ENCODE measurements at regions of chr5 and their contacts with region 1.

Region 1: DNA sequence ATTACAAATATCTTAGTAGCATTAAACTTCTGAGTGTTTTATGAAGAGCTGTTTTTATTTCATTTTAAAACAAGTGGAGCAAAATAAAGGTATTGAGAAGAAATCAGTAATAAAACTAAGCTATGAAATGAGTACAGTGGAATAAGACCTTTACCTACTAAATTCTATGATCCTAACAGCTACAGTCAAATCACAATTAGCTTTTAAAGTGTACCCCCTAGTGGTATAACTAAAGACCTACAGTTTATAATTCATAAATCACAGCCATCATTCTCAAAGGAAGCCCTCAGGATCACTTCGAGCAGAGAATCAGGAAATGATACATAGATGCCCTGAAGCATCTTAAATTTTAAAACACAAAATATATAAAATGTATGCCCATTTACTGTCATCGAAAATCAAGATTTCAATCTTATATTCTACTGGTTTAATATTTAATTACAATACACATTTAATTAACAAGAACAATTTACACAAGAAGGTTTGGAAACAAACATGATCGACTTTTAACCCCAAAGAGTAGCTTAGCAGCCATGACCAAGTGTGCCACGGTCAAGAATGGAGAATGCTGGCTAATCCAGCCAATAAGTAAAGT is 12.3 kb downstream of the CCNH start:
- DNase-seq: peak; percentile 48 to 57
- ATAC-seq: peak; percentile 83 to 88
- H3K4me3 ChIP-seq: no peak overlapping the region
- H3K27ac ChIP-seq: no peak overlapping the region
- H3K4me1 ChIP-seq: peaks cover 4% of the 10 kb centered on the region; the same call in 1 of the 3 replicates
- CTCF ChIP-seq: peak; percentile 69
- EP300 ChIP-seq: no peak
- POLR2A ChIP-seq: no peak
- RAD21 ChIP-seq: peak; percentile 71 to 72

Region 2: DNA sequence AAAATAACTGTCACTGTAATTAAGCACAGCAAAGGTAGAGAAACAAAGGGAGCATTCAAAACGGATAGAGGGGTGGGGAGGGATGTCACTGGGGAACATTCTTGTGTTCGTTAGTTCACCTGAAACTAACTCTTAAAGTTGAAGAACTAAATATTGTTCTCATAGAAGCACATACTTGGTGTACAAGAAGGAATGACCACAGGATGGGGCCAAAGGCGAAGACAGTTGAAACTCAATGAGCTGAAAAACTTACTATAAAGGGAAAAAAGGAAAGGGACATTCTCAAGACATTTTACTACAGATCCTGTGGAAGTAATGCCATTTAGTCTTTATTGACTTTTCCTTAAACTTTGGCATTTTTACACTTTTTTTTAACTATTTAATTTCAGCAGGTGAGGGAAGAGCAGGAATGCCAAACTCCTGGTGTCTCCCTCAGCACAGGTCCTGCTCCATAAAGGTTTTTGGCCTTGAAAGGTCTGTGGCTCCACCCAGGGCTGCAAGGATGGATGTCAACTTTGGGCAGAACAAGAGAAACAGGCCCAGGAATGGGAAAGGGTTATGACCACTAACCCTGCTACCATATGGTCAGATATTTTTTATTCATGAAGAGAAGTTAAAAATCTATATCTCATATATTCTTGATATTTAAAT is 330.3 kb before region 1 on chr5:
- CTCF ChIA-PET with region 1: interaction called, 18 read pairs
- POLR2A ChIA-PET with region 1: interaction called, 5 read pairs
- DNase-seq: peak in 1 of 2 experiments; percentile 39
- ATAC-seq: peak; percentile 50 to 69; a peak in 3 of 6 replicates
- H3K4me3 ChIP-seq: no peak overlapping the region
- H3K27ac ChIP-seq: no peak overlapping the region
- H3K4me1 ChIP-seq: no peaks in the 10 kb centered on the region
- CTCF ChIP-seq: peak; percentile 46
- EP300 ChIP-seq: no peak
- POLR2A ChIP-seq: no peak
- RAD21 ChIP-seq: peak; percentile 53 to 71

Region 3: DNA sequence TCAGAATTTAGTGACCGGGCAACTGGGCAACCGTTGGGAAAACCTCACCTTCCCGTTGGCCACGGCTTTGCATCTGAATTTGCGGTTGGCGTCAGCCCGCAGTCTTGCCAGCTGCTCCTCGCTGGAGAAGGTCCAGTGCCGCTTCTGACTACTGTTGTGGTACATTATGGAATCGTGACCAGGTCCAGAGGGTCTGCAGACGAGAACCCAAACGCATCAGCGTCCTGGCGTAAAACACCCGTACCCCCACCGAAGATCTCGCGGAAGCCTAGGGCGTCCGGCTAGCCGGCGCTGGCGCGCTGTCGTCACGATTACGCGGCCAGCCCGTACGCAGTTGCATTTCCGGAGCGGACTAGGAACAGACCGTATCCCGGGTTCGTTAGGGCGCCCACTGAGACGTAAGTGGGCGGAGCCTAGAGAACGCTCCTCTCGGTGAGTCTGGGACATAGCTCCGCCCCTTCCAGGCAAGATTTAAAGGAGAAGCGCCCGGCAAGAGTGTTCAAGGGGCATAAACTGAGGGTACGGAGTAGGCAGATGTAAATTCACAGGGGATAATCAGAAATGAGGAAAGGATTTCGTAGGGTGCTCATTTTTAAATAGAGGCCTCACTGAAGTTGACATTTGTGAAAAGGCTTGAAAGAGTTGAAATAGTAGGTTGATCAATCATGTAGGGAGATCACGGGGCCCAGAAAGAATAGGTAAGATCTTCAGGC is 12.4 kb after region 1 on chr5 and contains the start of gene CCNH:
- CTCF ChIA-PET with region 1: interaction called, 15 read pairs
- POLR2A ChIA-PET with region 1: interaction called, 4 read pairs
- DNase-seq: peak; percentile 86 to 96
- ATAC-seq: peak; percentile 98 to 99
- H3K4me3 ChIP-seq: peak within 1 kb of the TSS; percentile 69
- H3K27ac ChIP-seq: peak within 1 kb of the TSS; percentile 80 to 91
- H3K4me1 ChIP-seq: peaks cover 14% of the 10 kb centered on the region
- CTCF ChIP-seq: no peak
- EP300 ChIP-seq: no peak
- POLR2A ChIP-seq: peak; percentile 88
- RAD21 ChIP-seq: no peak
- polyA plus RNA-seq, gene CCNH: 64.8 and 85.1 TPM in 2 replicates

Region 4: DNA sequence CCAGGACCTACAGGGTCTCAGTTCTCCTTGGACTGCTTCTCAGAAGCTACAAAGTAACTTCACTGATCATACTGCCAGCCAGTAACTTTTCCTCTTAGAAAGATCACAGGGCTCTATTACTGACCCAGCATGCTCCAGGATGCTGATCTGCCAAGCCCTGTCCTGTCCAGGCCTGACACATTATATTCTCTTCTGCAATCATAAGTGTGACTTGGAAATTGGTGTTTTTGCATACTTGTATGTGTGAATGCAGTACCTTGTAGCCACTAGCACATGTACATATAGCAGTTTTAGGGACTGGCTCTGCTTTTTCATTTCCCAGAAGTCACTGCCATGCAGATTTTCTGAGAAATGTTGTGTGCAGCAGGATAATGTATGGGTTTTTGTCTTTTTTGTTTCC is 52.4 kb after region 1 on chr5:
- CTCF ChIA-PET with region 1: no interaction called
- POLR2A ChIA-PET with region 1: no interaction called
- DNase-seq: no peak
- ATAC-seq: no peak
- H3K4me3 ChIP-seq: no peak overlapping the region
- H3K27ac ChIP-seq: no peak overlapping the region
- H3K4me1 ChIP-seq: no peaks in the 10 kb centered on the region
- CTCF ChIP-seq: no peak
- EP300 ChIP-seq: no peak
- POLR2A ChIP-seq: no peak
- RAD21 ChIP-seq: no peak